ENCODE measurements at regions of chr11 and their contacts with region 1.

Region 1: GRCh38 chr11:18890615-18891014 is 48.6 kb downstream of the MRGPRX1 start:
- DNase-seq: no peak
- H3K4me3 ChIP-seq: no peak overlapping the region
- H3K27ac ChIP-seq: no peak overlapping the region
- H3K4me1 ChIP-seq: no peaks in the 10 kb centered on the region
- H3K27me3 ChIP-seq: no peaks in the 10 kb centered on the region
- CTCF ChIP-seq: peak; percentile 4 to 15 (median 4); a peak in 2 of 4 replicates
- EP300 ChIP-seq: no peak
- POLR2A ChIP-seq: no peak
- RAD21 ChIP-seq: peak in 1 of 2 experiments; percentile 8; a peak in 1 of 4 replicates

Region 2: GRCh38 chr11:18731949-18732821 is 158.4 kb before region 1 on chr11:
- CTCF ChIA-PET with region 1: no interaction called
- POLR2A ChIA-PET with region 1: no interaction called
- DNase-seq: peak in 1 of 2 experiments; percentile 90
- H3K4me3 ChIP-seq: no peak overlapping the region
- H3K27ac ChIP-seq: no peak overlapping the region
- H3K4me1 ChIP-seq: peaks cover 0 to 9% (median 3%) of the 10 kb centered on the region in 4 experiments; a peak in 5 of 7 replicates
- H3K27me3 ChIP-seq: no peaks in the 10 kb centered on the region
- CTCF ChIP-seq: peak; percentile 82 to 91 (median 86)
- EP300 ChIP-seq: no peak
- POLR2A ChIP-seq: no peak
- RAD21 ChIP-seq: peak; percentile 71 to 81

Region 3: DNA sequence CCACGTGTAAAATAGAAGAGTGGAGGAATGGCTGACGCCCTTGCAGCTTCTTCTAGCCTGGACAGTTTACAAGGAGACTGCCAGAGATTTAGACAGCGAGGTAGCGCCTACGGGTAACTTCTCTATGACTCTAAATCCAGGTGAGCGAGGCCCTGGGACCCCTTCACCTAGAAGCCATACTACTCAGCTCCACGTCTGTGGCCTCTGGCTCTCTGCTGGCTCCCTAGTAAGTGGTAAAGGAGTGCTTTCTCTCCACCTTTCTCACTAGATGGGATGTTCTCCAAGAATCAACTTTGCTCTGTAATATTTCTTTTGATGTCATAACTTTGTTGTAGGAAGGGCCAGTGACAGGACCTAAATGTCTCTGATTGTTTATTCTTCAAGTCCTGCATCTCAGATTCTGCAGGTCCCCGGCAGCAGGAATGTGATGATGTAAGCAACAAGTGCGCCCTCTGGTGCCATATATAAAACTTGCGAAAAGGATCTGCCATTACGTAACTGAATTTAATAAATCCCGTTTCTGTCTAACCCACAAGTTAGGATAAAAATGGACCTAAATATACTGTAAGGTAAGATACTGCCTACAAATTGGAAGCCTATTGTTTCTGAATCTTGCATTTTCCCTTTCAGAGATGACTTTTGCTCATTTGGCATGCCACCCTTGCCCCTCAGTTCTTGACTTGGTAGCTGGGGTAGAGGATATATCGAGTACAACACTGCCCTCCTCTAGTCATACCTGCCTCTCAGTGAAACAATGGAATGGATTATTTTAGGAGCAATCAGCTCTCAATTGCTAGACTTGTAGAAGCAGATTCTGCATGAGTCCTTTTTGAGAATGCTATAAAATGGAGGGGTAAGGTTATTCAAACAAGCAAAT is 88.0 kb before region 1 on chr11:
- CTCF ChIA-PET with region 1: no interaction called
- POLR2A ChIA-PET with region 1: no interaction called
- DNase-seq: peak in 1 of 2 experiments; percentile 54
- H3K4me3 ChIP-seq: no peak overlapping the region
- H3K27ac ChIP-seq: no peak overlapping the region
- H3K4me1 ChIP-seq: no peaks in the 10 kb centered on the region
- H3K27me3 ChIP-seq: no peaks in the 10 kb centered on the region
- CTCF ChIP-seq: peak; percentile 23 to 69 (median 61)
- EP300 ChIP-seq: no peak
- POLR2A ChIP-seq: no peak
- RAD21 ChIP-seq: peak; percentile 72 to 80

Region 4: GRCh38 chr11:18853086-18853720 is 37.4 kb before region 1 on chr11:
- CTCF ChIA-PET with region 1: interaction called, 17 read pairs
- POLR2A ChIA-PET with region 1: no interaction called
- DNase-seq: peak in 1 of 2 experiments; percentile 56
- H3K4me3 ChIP-seq: no peak overlapping the region
- H3K27ac ChIP-seq: no peak overlapping the region
- H3K4me1 ChIP-seq: peaks cover 0 to 3% (median 0%) of the 10 kb centered on the region in 4 experiments; a peak in 2 of 7 replicates
- H3K27me3 ChIP-seq: no peaks in the 10 kb centered on the region
- CTCF ChIP-seq: peak in 2 of 3 experiments; percentile 69 to 76; a peak in 3 of 4 replicates
- EP300 ChIP-seq: no peak
- POLR2A ChIP-seq: no peak
- RAD21 ChIP-seq: peak; percentile 87 to 90